ENCODE measurements at regions of chr10 and their contacts with region 1.

Region 1: DNA sequence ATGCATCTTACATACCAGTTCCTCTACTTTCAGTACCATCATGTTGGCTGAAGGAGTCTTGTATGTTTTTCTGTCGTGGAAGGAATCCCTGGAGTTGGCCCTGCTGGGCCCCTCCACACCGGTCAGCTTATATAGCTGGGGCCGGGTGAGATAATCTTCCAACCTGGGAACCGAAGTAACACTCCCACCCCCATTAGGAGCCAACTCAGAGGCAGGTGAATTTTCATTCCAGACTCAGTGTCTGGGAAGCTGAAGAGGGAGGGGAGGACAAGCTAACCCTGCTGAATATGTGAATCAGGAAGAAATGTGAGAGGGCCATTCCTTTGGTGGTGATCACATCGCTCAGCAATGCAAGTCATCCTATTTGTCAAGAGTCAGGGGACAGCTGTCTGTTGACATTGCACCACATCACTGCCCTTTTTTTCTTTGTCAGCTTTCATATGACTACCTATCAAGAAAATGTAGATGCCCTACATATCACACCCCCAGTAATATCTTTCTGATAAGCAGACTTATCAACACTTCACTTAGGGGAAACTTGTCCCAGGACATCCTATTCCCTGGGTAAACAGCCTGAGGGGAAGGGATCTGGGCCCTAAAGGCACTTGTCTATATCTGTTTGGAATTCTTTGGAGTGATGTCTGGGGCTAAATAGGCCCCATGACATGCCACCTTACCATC is at the start of gene ANKRD1:
- DNase-seq: peak; percentile 50
- ATAC-seq: peak; percentile 88
- total RNA-seq, gene ANKRD1: 1,733 TPM

Region 2: GRCh38 chr10:90969947-90970684 is 49.0 kb after region 1 on chr10:
- intact Hi-C with region 1: loop called (anchors 5 kb)
- DNase-seq: no peak
- ATAC-seq: peak; percentile 67

Region 3: GRCh38 chr10:90985321-90985933 is 64.3 kb after region 1 on chr10:
- intact Hi-C with region 1: loop called (anchors 5 kb)
- DNase-seq: no peak
- ATAC-seq: peak; percentile 82